ENCODE measurements at regions of chr9 and their contacts with region 1.

Region 1: DNA sequence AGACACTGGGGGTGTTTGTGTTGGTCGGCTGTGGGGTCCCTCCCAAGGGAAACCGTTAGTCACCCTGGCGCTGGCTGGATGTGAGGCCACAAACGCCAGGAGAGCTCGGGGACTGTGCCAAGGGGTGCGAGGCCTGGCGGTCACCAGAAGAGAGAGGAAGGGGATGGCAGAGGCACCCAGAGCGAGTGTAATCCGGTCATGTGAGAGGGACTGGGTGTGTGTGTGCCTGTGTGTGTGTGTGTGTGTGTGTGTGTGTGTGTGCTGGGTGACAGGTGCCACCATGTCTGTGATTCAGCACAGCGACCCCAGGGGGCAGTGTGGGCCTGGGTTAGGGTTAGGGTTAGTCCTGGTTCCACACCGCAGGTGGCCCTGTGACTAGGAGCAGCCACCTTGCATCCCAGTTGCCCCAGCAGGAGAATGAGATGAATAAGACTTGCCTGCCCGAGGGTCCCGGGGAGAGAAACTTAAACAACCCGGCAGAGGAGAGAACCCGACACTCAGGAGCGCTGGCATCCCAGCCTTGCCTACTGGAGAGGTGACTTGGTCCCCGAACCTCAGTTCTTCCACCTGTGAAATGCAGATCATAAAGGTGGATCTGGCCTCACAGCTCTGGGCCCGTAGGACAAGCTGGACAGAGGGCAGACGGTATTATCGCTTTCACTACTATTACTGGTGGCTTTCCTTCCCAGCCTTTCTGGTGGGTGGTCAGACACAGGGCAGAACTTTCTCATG is 1.4 kb upstream of the ADAMTSL2 start:
- DNase-seq: no peak
- H3K4me3 ChIP-seq: no peak overlapping the region
- H3K27me3 ChIP-seq: peaks cover 39% of the 10 kb centered on the region
- CTCF ChIP-seq: peak; percentile 64

Region 2: GRCh38 chr9:133715866-133716563 is 182.9 kb after region 1 on chr9:
- CTCF ChIA-PET with region 1: interaction called, 17 read pairs
- POLR2A ChIA-PET with region 1: no interaction called
- DNase-seq: no peak
- H3K4me3 ChIP-seq: no peak overlapping the region
- H3K27me3 ChIP-seq: no peaks in the 10 kb centered on the region; the same call in 1 of the 2 replicates
- CTCF ChIP-seq: peak; percentile 46

Region 3: DNA sequence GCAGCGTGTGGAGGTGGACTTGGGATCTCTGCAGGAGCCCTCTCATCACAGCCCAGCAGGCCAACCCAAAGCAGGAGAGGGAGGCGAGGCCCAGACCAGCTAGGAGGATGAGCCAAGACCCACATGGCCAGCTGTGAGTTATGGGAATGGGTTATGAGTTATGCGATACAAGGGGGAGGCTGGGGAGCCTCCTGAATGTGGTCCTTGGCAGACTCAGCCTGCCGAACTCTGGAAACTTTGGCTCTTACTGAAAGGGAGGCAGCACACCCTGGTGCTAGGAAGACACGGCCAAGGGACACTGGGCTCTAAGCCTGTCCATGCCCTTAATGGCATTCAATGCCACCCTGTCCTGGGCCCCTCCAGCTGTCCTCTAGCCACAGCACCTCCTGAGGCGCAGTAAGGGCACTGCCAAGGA is 466.8 kb after region 1 on chr9:
- CTCF ChIA-PET with region 1: no interaction called
- POLR2A ChIA-PET with region 1: no interaction called
- DNase-seq: no peak
- H3K4me3 ChIP-seq: no peak overlapping the region
- H3K27me3 ChIP-seq: peaks cover 2% of the 10 kb centered on the region; the same call in 1 of the 2 replicates
- CTCF ChIP-seq: no peak